ENCODE measurements at regions of chr1 and their contacts with region 1.

Region 1: GRCh38 chr1:239898062-239898730 is 193.5 kb upstream of the FMN2 start:
- DNase-seq: peak; percentile 75 to 78
- H3K4me3 ChIP-seq: no peak overlapping the region
- H3K4me3 Mint-ChIP-seq: no peak overlapping the region
- H3K27ac Mint-ChIP-seq: no peak overlapping the region
- H3K4me1 ChIP-seq: no peaks in the 10 kb centered on the region
- H3K4me1 Mint-ChIP-seq: no peaks in the 10 kb centered on the region
- H3K27me3 ChIP-seq: no peaks in the 10 kb centered on the region
- H3K27me3 Mint-ChIP-seq: peaks cover 2% of the 10 kb centered on the region
- CTCF ChIP-seq: peak; percentile 86 to 92

Region 2: DNA sequence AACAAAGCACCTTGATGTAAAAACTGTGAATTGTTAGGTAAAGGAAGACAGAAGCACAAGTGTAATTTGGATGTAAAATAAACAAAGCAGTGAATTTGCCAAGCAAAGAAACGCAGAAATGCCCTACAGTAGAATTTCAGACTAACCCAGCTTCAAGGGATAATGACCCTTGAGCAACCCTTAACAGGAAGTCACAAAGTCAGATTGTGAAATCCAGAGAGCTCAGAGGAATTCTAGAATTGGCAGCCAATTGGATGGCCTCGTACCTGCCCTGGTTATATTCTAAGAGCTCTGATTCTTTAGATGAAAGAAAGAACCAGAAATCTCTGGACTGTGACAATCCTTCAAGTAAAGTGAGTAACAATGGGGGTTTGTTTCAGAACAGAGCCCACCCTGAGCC is 664.6 kb before region 1 on chr1:
- CTCF ChIA-PET with region 1: no interaction called
- POLR2A ChIA-PET with region 1: no interaction called
- intact Hi-C with region 1: loop called (anchors 10 kb)
- DNase-seq: peak in 1 of 2 experiments; percentile 17
- H3K4me3 ChIP-seq: no peak overlapping the region
- H3K4me3 Mint-ChIP-seq: no peak overlapping the region
- H3K27ac Mint-ChIP-seq: no peak overlapping the region
- H3K4me1 ChIP-seq: peaks cover 17% of the 10 kb centered on the region
- H3K4me1 Mint-ChIP-seq: peaks cover 18% of the 10 kb centered on the region
- H3K27me3 ChIP-seq: no peaks in the 10 kb centered on the region
- H3K27me3 Mint-ChIP-seq: no peaks in the 10 kb centered on the region
- CTCF ChIP-seq: no peak

Region 3: GRCh38 chr1:239606850-239607400 is 291.3 kb before region 1 on chr1:
- CTCF ChIA-PET with region 1: no interaction called
- POLR2A ChIA-PET with region 1: no interaction called
- intact Hi-C with region 1: loop called (anchors 10 kb)
- DNase-seq: no peak
- H3K4me3 ChIP-seq: no peak overlapping the region
- H3K4me3 Mint-ChIP-seq: no peak overlapping the region
- H3K27ac Mint-ChIP-seq: no peak overlapping the region
- H3K4me1 ChIP-seq: no peaks in the 10 kb centered on the region
- H3K4me1 Mint-ChIP-seq: no peaks in the 10 kb centered on the region
- H3K27me3 ChIP-seq: no peaks in the 10 kb centered on the region
- H3K27me3 Mint-ChIP-seq: no peaks in the 10 kb centered on the region
- CTCF ChIP-seq: no peak

Region 4: DNA sequence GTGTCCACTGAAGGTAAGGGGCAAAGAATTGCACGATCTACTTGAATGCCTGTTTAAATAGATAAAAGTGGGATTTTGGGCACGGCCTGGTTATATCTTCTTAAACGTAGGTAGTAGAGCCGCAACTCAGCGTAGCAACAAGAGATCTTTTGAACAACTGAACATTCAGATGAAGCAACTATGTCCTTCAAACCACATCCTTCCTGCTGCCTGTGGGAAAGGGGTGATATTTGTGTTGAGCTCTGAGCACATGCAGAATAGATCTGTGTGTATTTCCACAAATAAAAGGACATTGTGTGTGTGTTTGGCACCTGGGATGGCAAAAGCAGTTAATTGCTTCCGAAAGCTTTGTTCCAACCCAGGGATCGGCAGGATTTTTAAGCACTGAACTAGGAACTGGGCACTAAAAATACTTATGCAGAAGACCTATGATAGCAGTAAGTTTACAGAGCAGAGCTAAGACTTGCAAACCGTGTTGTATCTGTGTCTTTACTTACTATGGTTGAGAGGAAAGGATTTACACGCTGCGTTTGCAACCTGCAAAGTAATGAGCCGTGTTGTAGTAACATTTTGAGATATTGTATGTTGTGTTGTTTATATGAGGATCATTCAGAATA is 178.4 kb before region 1 on chr1:
- CTCF ChIA-PET with region 1: interaction called, 3 read pairs
- POLR2A ChIA-PET with region 1: no interaction called
- intact Hi-C with region 1: loop called (anchors 10 kb)
- DNase-seq: no peak
- H3K4me3 ChIP-seq: no peak overlapping the region
- H3K4me3 Mint-ChIP-seq: no peak overlapping the region
- H3K27ac Mint-ChIP-seq: no peak overlapping the region
- H3K4me1 ChIP-seq: peaks cover 7% of the 10 kb centered on the region; the same call in 1 of the 2 replicates
- H3K4me1 Mint-ChIP-seq: no peaks in the 10 kb centered on the region
- H3K27me3 ChIP-seq: no peaks in the 10 kb centered on the region
- H3K27me3 Mint-ChIP-seq: no peaks in the 10 kb centered on the region
- CTCF ChIP-seq: no peak

Region 5: DNA sequence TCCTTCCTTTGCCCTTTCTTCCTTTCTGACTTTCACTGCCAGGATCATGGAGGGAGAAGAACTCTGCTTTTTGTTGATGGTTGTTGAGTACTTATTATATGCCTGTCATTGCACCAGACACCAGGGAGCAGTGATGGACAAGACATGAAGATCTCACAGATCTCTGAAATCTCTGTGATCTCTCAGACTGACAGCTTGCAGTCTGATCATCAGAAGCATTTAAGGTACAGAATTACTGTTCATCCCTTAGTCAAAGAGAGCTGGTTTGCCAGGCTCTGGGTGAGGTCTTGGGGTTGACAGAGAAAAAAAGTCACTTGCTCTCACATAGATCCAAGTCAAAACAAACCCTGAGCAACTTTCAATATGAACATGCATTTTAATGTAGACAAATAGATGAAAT is 106.0 kb before region 1 on chr1:
- CTCF ChIA-PET with region 1: interaction called, 3 read pairs
- POLR2A ChIA-PET with region 1: no interaction called
- intact Hi-C with region 1: loop called (anchors 1 kb)
- DNase-seq: no peak
- H3K4me3 ChIP-seq: no peak overlapping the region
- H3K4me3 Mint-ChIP-seq: no peak overlapping the region
- H3K27ac Mint-ChIP-seq: no peak overlapping the region
- H3K4me1 ChIP-seq: no peaks in the 10 kb centered on the region
- H3K4me1 Mint-ChIP-seq: no peaks in the 10 kb centered on the region
- H3K27me3 ChIP-seq: no peaks in the 10 kb centered on the region
- H3K27me3 Mint-ChIP-seq: no peaks in the 10 kb centered on the region
- CTCF ChIP-seq: no peak

Region 6: DNA sequence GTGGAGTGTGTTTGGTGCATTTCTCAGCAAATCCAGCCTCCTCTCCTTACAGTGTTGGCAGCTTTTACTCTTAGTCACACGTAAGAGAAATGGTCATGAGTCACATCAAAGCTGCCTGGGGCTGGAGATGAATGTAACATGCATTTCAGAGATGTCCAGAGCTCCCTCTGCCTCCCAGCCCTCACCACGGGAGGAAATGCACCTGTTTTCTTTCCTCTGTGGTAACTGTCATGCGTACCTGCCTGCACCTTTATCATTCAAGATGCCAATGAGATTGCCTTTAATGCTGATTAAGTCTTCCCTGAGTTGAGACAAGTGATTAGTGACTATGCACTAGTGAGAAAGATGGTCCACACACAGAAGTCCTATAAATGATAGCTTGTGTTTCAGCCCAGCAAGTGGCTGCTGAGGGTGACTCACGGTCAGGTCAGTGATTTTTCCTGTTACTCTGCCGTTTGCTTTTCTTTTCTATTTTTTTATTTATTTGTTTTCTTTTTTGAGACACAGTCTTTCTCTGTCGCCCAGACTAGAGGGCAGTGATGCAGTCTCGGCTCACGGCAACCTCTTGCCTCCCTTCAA is 83.8 kb before region 1 on chr1:
- CTCF ChIA-PET with region 1: interaction called, 4 read pairs
- POLR2A ChIA-PET with region 1: no interaction called
- intact Hi-C with region 1: loop called (anchors 2 kb)
- DNase-seq: peak; percentile 14 to 35
- H3K4me3 ChIP-seq: no peak overlapping the region
- H3K4me3 Mint-ChIP-seq: no peak overlapping the region
- H3K27ac Mint-ChIP-seq: no peak overlapping the region
- H3K4me1 ChIP-seq: peaks cover 12% of the 10 kb centered on the region
- H3K4me1 Mint-ChIP-seq: peaks cover 16% of the 10 kb centered on the region
- H3K27me3 ChIP-seq: no peaks in the 10 kb centered on the region
- H3K27me3 Mint-ChIP-seq: no peaks in the 10 kb centered on the region
- CTCF ChIP-seq: no peak

Region 7: DNA sequence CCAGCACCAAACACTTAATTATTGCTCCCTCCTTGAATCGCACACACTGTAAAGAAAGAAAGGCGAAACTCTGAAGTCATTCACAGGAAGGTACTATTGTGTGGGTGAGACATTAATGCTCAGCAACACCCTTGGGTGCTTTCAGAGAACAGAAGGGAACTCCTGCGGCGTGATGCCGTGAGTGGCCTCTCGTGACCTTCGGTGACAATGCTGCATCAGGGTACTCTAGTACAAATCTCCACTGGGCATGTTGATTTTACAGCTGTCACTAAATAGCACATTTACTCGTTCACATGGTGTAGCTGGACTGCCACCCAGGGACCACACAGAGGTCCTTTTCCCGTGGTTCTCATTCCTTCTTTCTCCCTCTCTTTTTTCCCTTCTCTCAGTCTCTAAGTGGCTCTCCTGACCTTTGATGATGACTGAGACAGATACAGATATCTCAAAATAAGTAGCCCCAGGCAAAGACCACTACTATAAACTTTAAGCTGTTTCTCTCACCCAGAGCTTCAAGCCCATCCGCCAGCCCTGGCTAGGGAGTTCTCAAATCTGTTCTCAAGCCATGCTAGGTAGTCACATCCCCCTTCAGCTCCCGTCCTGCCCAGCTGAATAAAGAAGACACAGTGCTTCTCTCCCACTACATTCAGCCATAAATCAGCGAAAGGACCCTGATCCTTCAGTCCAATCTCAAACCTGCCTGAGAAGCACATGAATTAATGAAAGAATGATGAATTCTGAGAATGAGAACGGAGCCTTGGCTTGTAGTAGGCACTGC is 30.0 kb before region 1 on chr1:
- CTCF ChIA-PET with region 1: no interaction called
- POLR2A ChIA-PET with region 1: no interaction called
- intact Hi-C with region 1: no loop called
- DNase-seq: no peak
- H3K4me3 ChIP-seq: no peak overlapping the region
- H3K4me3 Mint-ChIP-seq: no peak overlapping the region
- H3K27ac Mint-ChIP-seq: no peak overlapping the region
- H3K4me1 ChIP-seq: no peaks in the 10 kb centered on the region
- H3K4me1 Mint-ChIP-seq: no peaks in the 10 kb centered on the region
- H3K27me3 ChIP-seq: no peaks in the 10 kb centered on the region
- H3K27me3 Mint-ChIP-seq: no peaks in the 10 kb centered on the region
- CTCF ChIP-seq: no peak

Region 8: GRCh38 chr1:240136402-240136801 is 238.2 kb after region 1 on chr1:
- CTCF ChIA-PET with region 1: no interaction called
- POLR2A ChIA-PET with region 1: no interaction called
- intact Hi-C with region 1: no loop called
- DNase-seq: no peak
- H3K4me3 ChIP-seq: no peak overlapping the region
- H3K4me3 Mint-ChIP-seq: no peak overlapping the region
- H3K27ac Mint-ChIP-seq: no peak overlapping the region
- H3K4me1 ChIP-seq: no peaks in the 10 kb centered on the region
- H3K4me1 Mint-ChIP-seq: no peaks in the 10 kb centered on the region
- H3K27me3 ChIP-seq: no peaks in the 10 kb centered on the region
- H3K27me3 Mint-ChIP-seq: peaks cover 2% of the 10 kb centered on the region
- CTCF ChIP-seq: no peak